Calu3 (cell line): ENCODE measurements at regions of chr3 and their contacts with region 1.

Region 1: DNA sequence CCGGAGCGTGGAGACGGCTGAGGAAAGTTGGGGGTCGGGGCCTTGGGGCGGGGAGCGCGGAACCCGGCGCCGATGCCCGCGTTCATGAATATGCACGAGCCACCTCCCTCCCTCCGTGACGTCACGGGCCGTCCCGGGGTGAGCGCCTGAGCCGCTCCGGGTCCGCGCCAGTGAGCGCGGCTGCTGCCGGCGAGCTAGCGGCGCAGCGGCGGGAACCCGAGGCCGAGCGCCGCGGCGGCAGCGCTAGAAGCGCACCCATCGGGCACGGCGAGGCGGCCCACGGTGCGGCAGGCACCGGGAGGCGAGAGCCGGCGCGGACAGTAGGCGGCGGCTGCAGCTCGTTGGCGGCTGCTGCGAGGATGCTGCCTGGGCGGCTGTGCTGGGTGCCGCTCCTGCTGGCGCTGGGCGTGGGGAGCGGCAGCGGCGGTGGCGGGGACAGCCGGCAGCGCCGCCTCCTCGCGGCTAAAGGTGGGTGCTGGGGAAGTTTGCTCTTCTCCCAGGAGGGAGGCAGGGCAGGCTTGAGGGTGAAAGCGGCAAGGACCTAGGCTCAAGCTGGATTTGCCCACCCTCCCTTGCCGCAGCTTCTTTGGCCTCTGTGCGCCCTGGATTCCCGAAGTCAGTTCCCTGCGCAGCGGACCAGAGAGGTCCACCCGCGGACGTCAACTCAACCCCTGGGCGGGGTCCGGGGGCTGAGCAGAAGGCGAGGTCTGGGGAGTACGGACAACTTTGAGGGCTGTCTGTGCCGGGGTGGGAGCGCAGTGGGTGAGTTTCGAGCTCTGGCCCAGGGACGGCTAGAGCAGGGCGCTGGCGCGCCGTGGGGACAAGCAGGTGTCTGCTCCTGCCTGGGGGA is at the start of gene CLSTN2:
- DNase-seq: peak; percentile 63
- H3K4me3 Mint-ChIP-seq: peak within 1 kb of the TSS; percentile 79
- H3K27ac Mint-ChIP-seq: no peak within 1 kb of the TSS
- H3K4me1 Mint-ChIP-seq: peaks cover 12% of the 10 kb centered on the region
- H3K27me3 Mint-ChIP-seq: peaks cover 81% of the 10 kb centered on the region
- CTCF ChIP-seq: no peak
- total RNA-seq, gene CLSTN2: 0.07 TPM in 2 replicates

Region 2: GRCh38 chr3:139588450-139588849 is 346.8 kb before region 1 on chr3:
- CTCF ChIA-PET with region 1: no interaction called
- intact Hi-C with region 1: loop called (anchors 10 kb)
- DNase-seq: peak; percentile 41
- H3K4me3 Mint-ChIP-seq: no peak overlapping the region
- H3K27ac Mint-ChIP-seq: no peak overlapping the region
- H3K4me1 Mint-ChIP-seq: no peaks in the 10 kb centered on the region
- H3K27me3 Mint-ChIP-seq: no peaks in the 10 kb centered on the region
- CTCF ChIP-seq: no peak

Region 3: DNA sequence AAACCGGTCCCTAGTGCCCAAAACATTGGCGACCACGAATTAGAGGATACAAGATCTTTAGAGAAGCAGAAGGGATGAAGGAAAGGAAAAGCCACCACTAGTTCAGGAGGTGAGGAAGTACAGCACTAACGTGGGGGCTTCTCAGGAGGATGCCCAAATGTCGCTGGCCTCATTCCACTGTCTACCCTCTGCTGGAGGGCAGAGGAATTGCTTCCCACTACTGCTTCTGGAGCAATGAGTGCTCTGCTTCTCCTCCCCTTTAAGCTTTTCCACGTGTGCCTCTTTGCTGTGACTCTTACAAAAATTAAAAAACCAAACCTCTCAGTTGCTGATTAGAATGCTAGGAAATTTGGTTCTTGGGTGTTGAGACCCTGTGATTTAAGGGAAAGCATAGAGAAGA is 281.0 kb after region 1 on chr3:
- CTCF ChIA-PET with region 1: no interaction called
- intact Hi-C with region 1: loop called (anchors 5 kb)
- DNase-seq: peak; percentile 13
- H3K4me3 Mint-ChIP-seq: no peak overlapping the region
- H3K27ac Mint-ChIP-seq: no peak overlapping the region
- H3K4me1 Mint-ChIP-seq: no peaks in the 10 kb centered on the region
- H3K27me3 Mint-ChIP-seq: no peaks in the 10 kb centered on the region
- CTCF ChIP-seq: peak; percentile 74